ENCODE measurements at regions of chr4 and their contacts with region 1.

Region 1: DNA sequence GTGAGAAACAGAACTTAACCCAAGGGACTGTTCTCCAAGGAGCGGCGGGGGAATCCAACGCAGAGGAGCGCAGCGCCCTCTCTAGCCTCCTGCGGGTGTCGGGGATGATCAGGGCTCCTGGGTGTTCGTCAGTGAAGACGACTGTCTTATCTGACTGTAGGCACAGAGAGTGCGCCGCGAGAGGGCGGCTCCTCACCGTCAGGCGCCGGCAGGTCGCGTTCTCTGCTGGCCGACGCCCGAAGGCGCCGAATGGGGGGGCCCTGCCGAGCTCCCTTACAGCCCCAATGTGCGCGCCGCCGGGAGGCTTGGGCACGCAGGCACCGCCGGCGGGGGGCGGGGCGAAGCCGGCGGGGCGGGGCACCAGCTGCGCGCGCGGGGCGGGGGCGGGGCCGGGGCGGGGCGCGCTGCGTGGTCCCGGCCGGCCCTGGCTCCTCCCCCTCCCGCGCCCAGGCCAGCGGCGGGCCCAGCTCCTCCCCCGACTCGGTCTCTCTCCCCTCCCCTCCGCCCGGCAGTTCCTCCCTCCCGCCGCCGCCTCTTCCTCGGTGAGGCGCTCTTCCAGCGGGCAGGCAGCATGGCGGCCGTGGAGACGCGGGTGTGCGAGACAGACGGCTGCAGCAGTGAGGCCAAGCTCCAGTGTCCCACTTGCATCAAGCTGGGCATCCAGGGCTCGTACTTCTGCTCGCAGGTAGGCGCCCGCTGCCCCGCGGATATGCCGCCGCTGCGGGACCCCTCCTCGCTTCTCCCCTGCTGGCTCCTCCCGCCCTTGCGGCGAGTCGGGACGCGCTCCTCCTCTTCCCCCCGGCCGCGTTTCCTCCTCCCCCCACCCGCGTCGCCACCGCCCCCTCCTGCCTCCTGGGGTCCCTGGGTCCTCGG is at the start of gene METAP1:
- DNase-seq: peak; percentile 78 to 99 (median 90)

Region 2: DNA sequence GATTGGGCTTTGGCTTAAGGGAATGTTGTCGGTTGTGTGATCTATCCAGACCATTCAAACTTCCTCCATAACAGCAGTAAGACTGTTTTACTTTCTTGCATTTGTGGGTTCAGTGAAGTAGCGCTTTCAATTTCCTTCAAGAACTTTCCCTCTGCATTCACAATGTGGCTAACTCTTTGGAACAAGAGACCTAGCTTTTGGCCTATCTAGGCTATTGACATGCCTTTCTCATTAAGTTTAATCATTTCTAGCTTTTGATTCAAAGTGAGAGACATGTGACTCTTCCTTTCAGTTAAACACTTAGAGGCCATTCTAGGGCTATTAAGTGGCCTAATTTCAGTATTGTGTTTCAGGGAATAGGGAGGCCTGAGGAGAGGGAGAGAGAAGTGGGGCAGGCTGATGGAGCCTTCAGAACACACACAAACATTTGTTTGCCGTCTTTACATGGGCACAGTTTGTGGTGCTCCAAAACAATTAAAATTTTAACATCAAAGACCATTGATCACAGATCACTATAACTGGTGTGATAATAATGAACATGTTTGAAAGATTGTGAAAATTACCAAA is 59.1 kb after region 1 on chr4:
- intact Hi-C with region 1: loop called (anchors 2 kb)
- DNase-seq: no peak

Region 3: GRCh38 chr4:99088481-99089365 is 93.3 kb after region 1 on chr4 and contains the start of gene ADH5:
- intact Hi-C with region 1: loop called (anchors 10 kb)
- DNase-seq: peak; percentile 67 to 96 (median 76)

Measured in posterior cingulate gyrus (tissue), 11 donors.